Gastrocnemius medialis (tissue), 4 donors: ENCODE measurements at regions of chr1 and their contacts with region 1.

Region 1: GRCh38 chr1:193121616-193122593 is at the start of gene CDC73:
- DNase-seq: peak; percentile 96
- ATAC-seq: peak; percentile 95 to 97
- H3K4me3 ChIP-seq: peak within 1 kb of the TSS; percentile 74 to 87 (median 82)
- H3K27ac ChIP-seq: peak within 1 kb of the TSS; percentile 89 to 96 (median 94)
- H3K4me1 ChIP-seq: peaks cover 24 to 25% of the 10 kb centered on the region in 2 donors
- H3K27me3 ChIP-seq: no peaks in the 10 kb centered on the region
- CTCF ChIP-seq: peak; percentile 92 to 99 (median 98)
- POLR2A ChIP-seq: peak; percentile 79 to 85
- total RNA-seq, gene CDC73: 12.3 to 23.7 (median 17.4) TPM

Region 2: DNA sequence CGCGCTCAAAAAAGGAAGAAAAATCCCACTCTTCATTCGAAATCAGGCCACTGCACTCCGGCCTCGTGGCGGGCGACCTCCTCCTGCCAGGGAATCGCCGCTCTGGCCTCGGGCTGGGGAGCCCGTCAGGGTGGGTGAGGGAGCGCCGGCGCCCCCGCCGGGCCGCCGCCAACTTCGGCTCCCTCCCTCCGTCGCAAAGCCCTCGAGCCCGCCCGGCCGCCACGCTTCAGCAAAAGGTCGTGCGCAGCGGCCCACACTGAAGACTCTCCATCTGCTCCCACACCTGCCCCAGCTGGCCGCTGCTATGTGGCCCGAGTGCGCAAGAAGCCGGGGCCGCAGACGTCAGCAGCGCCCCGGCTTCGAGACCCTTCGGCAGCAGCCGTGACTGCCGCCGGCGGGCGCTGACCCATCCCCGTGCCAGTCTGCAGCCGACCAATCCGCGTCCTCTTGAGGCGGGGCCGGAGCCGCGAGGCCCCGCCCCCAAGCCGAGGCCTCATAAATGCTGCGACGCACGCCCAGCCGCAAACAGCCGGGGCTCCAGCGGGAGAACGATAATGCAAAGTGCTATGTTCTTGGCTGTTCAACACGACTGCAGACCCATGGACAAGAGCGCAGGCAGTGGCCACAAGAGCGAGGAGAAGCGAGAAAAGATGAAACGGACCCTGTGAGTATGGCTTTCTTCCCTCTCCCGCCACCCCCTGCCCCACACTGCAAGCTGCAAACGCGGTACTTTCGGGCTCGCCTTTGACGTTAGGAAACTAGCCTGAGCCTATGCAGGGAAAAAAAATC is 313.2 kb before region 1 on chr1 and contains the start of gene RGS2:
- in situ Hi-C with region 1: loop called in 2 of 4 experiments (anchors 25 kb)
- intact Hi-C with region 1: loop called (anchors 1 kb)
- DNase-seq: peak; percentile 80 to 86
- ATAC-seq: peak; percentile 93
- H3K4me3 ChIP-seq: peak within 1 kb of the TSS; percentile 73 to 87 (median 80)
- H3K27ac ChIP-seq: peak within 1 kb of the TSS; percentile 73 to 88 (median 82)
- H3K4me1 ChIP-seq: peaks cover 12 to 19% of the 10 kb centered on the region in 2 donors
- H3K27me3 ChIP-seq: no peaks in the 10 kb centered on the region
- CTCF ChIP-seq: peak in 1 of 5 experiments; percentile 12
- POLR2A ChIP-seq: peak; percentile 88 to 98
- total RNA-seq, gene RGS2: 1.2 to 14.6 (median 5.8) TPM

Region 3: GRCh38 chr1:193059268-193060225 is 62.4 kb before region 1 on chr1 and contains the starts of genes RO60 and UCHL5:
- in situ Hi-C with region 1: loop called in 3 of 4 experiments (anchors 5 to 10 kb)
- intact Hi-C with region 1: loop called (anchors 1 kb)
- DNase-seq: peak; percentile 93 to 97
- ATAC-seq: peak; percentile 94 to 95
- H3K4me3 ChIP-seq: peak within 1 kb of the TSS; percentile 80 to 97 (median 90)
- H3K27ac ChIP-seq: peak within 1 kb of the TSS; percentile 96 to 98 (median 98)
- H3K4me1 ChIP-seq: peaks cover 36 to 44% of the 10 kb centered on the region in 2 donors
- H3K27me3 ChIP-seq: no peaks in the 10 kb centered on the region
- CTCF ChIP-seq: peak in 2 of 5 experiments; percentile 12 to 22
- POLR2A ChIP-seq: peak; percentile 87 to 91
- total RNA-seq, gene RO60: 56.1 to 74.0 (median 58.2) TPM
- total RNA-seq, gene UCHL5: 26.0 to 40.6 (median 30.7) TPM